Caco-2 (cell line): ENCODE measurements at regions of chr9 and their contacts with region 1.

Region 1: GRCh38 chr9:116860509-116861120 is 173.5 kb downstream of the TRIM32 start:
- DNase-seq: peak; percentile 69 to 80
- H3K4me3 ChIP-seq: no peak overlapping the region
- H3K4me3 Mint-ChIP-seq: no peak overlapping the region
- H3K27ac Mint-ChIP-seq: no peak overlapping the region
- H3K4me1 ChIP-seq: no peaks in the 10 kb centered on the region
- H3K4me1 Mint-ChIP-seq: no peaks in the 10 kb centered on the region
- H3K27me3 ChIP-seq: no peaks in the 10 kb centered on the region
- H3K27me3 Mint-ChIP-seq: peaks cover 8% of the 10 kb centered on the region
- CTCF ChIP-seq: peak; percentile 76

Region 2: DNA sequence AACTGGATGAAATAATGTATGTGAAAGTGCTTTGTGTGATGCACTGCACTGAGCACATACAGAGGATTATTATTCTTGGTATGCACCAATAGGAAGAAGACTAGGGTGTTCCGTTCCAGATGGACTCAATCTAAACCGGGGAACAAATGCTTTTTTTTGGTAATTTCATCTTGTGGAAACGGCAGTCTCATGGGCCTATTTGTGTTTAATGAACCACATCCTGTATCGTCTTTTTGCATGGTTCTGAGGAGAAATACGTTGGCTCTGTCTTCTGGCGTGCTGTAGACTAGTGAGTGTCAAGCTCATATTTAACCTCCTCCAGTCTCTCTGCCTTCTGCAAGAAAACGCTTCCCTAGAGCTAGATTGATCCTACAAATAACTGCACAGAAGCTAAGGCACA is 143.5 kb before region 1 on chr9:
- CTCF ChIA-PET with region 1: no interaction called
- POLR2A ChIA-PET with region 1: no interaction called
- intact Hi-C with region 1: no loop called
- DNase-seq: no peak
- H3K4me3 ChIP-seq: no peak overlapping the region
- H3K4me3 Mint-ChIP-seq: no peak overlapping the region
- H3K27ac Mint-ChIP-seq: no peak overlapping the region
- H3K4me1 ChIP-seq: no peaks in the 10 kb centered on the region
- H3K4me1 Mint-ChIP-seq: peaks cover 13% of the 10 kb centered on the region
- H3K27me3 ChIP-seq: no peaks in the 10 kb centered on the region
- H3K27me3 Mint-ChIP-seq: no peaks in the 10 kb centered on the region
- CTCF ChIP-seq: no peak

Region 3: GRCh38 chr9:116737152-116737546 is 123.5 kb before region 1 on chr9:
- CTCF ChIA-PET with region 1: interaction called, 76 read pairs
- POLR2A ChIA-PET with region 1: no interaction called
- intact Hi-C with region 1: loop called (anchors 1 kb)
- DNase-seq: peak; percentile 85 to 90
- H3K4me3 ChIP-seq: no peak overlapping the region
- H3K4me3 Mint-ChIP-seq: no peak overlapping the region
- H3K27ac Mint-ChIP-seq: no peak overlapping the region
- H3K4me1 ChIP-seq: no peaks in the 10 kb centered on the region
- H3K4me1 Mint-ChIP-seq: peaks cover 7% of the 10 kb centered on the region
- H3K27me3 ChIP-seq: no peaks in the 10 kb centered on the region
- H3K27me3 Mint-ChIP-seq: peaks cover 4% of the 10 kb centered on the region
- CTCF ChIP-seq: peak; percentile 89 to 97